ENCODE measurements at regions of chr7 and their contacts with region 1.

Region 1: GRCh38 chr7:85041605-85042216 is 145.1 kb downstream of the SEMA3D start:
- DNase-seq: peak; percentile 50
- H3K27ac ChIP-seq: no peak overlapping the region
- CTCF ChIP-seq: peak; percentile 88

Region 2: DNA sequence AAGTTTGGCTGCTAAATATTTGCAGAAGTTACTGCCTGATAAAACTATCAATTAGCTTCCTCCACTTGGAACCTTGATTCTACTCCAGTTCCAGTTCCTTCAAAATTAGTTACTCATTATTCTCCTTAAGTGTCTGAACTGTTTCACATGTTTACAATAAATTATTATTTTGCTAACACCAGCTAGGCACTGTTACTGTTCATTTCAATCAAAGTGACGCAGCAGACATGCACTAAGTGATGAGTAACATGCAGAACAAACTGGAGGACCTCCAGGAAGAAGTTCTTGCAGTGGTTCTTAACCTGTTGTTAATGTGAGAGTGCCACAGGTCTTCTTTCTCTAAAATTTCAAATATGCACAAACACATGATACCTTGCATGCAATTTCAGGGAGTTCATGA is 355.3 kb before region 1 on chr7:
- CTCF ChIA-PET with region 1: no interaction called
- POLR2A ChIA-PET with region 1: no interaction called
- DNase-seq: no peak
- H3K27ac ChIP-seq: no peak overlapping the region
- CTCF ChIP-seq: no peak

Region 3: GRCh38 chr7:85191383-85191782 is 149.7 kb after region 1 on chr7:
- CTCF ChIA-PET with region 1: interaction called, 13 read pairs
- POLR2A ChIA-PET with region 1: no interaction called
- DNase-seq: peak; percentile 25
- H3K27ac ChIP-seq: no peak overlapping the region
- CTCF ChIP-seq: 0 out of 2 replicates have a peak, but pooled peaks have one; percentile 7

Region 4: GRCh38 chr7:85829817-85830432 is 788.2 kb after region 1 on chr7:
- CTCF ChIA-PET with region 1: interaction called, 12 read pairs
- POLR2A ChIA-PET with region 1: no interaction called
- DNase-seq: no peak
- H3K27ac ChIP-seq: no peak overlapping the region
- CTCF ChIP-seq: peak; percentile 50; the same call in 1 of the 2 replicates

Measured in RWPE1 (cell line).